ENCODE measurements at regions of chr1 and their contacts with region 1.

Region 1: DNA sequence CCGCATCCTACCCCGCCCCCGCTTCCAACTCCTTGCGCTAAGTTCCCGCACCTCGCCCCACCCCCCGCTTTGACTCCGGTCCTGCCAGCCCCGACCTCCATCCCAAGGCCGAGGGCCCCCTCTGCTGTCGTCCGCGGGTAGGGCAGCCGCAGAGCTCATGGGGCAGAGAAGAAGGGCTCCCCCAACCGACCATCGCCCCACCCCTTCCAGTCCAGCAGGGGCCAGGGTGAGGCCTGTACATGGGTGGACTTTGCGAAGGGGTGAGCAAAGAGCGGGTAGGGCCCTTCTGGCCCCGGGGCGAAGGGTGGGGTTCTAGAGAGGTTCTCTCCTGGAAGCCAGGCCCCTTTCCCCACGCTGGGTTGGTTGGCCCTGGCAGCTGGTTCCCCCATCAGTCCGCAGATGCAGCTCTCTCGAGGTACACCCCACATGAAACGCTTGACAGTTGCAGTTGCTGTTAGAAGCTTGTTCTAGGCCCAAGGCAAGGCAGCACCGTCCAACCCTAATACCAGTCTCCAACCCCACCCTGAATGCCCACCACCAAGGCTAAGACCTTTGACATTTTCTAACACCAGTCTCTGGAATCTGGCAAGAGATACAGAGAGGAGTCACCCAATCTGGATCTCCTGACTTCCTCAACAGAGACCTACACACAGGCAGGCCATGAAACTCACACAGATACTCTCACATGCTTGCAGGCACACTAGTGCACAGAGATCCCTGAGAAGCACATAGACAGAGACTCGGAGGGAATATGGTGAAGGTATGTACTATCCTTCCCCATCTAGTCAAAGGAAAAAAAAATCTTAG is 25.3 kb upstream of the ADGRB2 start:
- DNase-seq: peak; percentile 95 to 97
- ATAC-seq: peak; percentile 83 to 88 (median 83)
- H3K4me3 ChIP-seq: peak overlapping the region; percentile 73
- H3K4me3 Mint-ChIP-seq: peak overlapping the region; percentile 93
- H3K27ac ChIP-seq: peak overlapping the region; percentile 87
- H3K27ac Mint-ChIP-seq: peak overlapping the region; percentile 92 to 96
- H3K4me1 ChIP-seq: peaks cover 21% of the 10 kb centered on the region
- H3K4me1 Mint-ChIP-seq: peaks cover 11 to 28% of the 10 kb centered on the region in 2 donors
- H3K27me3 ChIP-seq: no peaks in the 10 kb centered on the region
- H3K27me3 Mint-ChIP-seq: no peaks in the 10 kb centered on the region
- CTCF ChIP-seq: peak; percentile 73

Region 2: GRCh38 chr1:31394628-31395193 is 394.8 kb before region 1 on chr1:
- intact Hi-C with region 1: loop called (anchors 2 kb)
- DNase-seq: peak; percentile 76 to 84
- ATAC-seq: peak; percentile 89 to 97 (median 96)
- H3K4me3 ChIP-seq: peak overlapping the region; percentile 45
- H3K4me3 Mint-ChIP-seq: peak overlapping the region; percentile 90
- H3K27ac ChIP-seq: no peak overlapping the region
- H3K27ac Mint-ChIP-seq: peak overlapping the region; percentile 53 to 65
- H3K4me1 ChIP-seq: peaks cover 9% of the 10 kb centered on the region
- H3K4me1 Mint-ChIP-seq: peaks cover 14 to 18% of the 10 kb centered on the region in 2 donors
- H3K27me3 ChIP-seq: no peaks in the 10 kb centered on the region
- H3K27me3 Mint-ChIP-seq: peaks cover 0 to 2% of the 10 kb centered on the region in 2 donors
- CTCF ChIP-seq: peak; percentile 88

Region 3: GRCh38 chr1:31501215-31501904 is 288.1 kb before region 1 on chr1:
- intact Hi-C with region 1: no loop called
- DNase-seq: no peak
- ATAC-seq: no peak
- H3K4me3 ChIP-seq: no peak overlapping the region
- H3K4me3 Mint-ChIP-seq: no peak overlapping the region
- H3K27ac ChIP-seq: no peak overlapping the region
- H3K27ac Mint-ChIP-seq: no peak overlapping the region
- H3K4me1 ChIP-seq: peaks cover 10% of the 10 kb centered on the region
- H3K4me1 Mint-ChIP-seq: peaks cover 10 to 11% of the 10 kb centered on the region in 2 donors
- H3K27me3 ChIP-seq: no peaks in the 10 kb centered on the region
- H3K27me3 Mint-ChIP-seq: peaks cover under 1 to 7% of the 10 kb centered on the region in 2 donors
- CTCF ChIP-seq: no peak

Region 4: GRCh38 chr1:31564134-31564989 is 225.1 kb before region 1 on chr1:
- intact Hi-C with region 1: loop called (anchors 1 kb)
- DNase-seq: peak in 1 of 2 donors; percentile 69
- ATAC-seq: peak; percentile 66 to 78 (median 74)
- H3K4me3 ChIP-seq: no peak overlapping the region
- H3K4me3 Mint-ChIP-seq: no peak overlapping the region
- H3K27ac ChIP-seq: no peak overlapping the region
- H3K27ac Mint-ChIP-seq: no peak overlapping the region
- H3K4me1 ChIP-seq: no peaks in the 10 kb centered on the region
- H3K4me1 Mint-ChIP-seq: no peaks in the 10 kb centered on the region
- H3K27me3 ChIP-seq: no peaks in the 10 kb centered on the region
- H3K27me3 Mint-ChIP-seq: peaks cover 22 to 34% of the 10 kb centered on the region in 2 donors
- CTCF ChIP-seq: peak; percentile 78

Region 5: GRCh38 chr1:31663622-31664452 is 125.6 kb before region 1 on chr1:
- intact Hi-C with region 1: loop called (anchors 1 kb)
- DNase-seq: peak; percentile 67 to 75
- ATAC-seq: peak; percentile 62 to 95 (median 85)
- H3K4me3 ChIP-seq: no peak overlapping the region
- H3K4me3 Mint-ChIP-seq: no peak overlapping the region
- H3K27ac ChIP-seq: no peak overlapping the region
- H3K27ac Mint-ChIP-seq: no peak overlapping the region
- H3K4me1 ChIP-seq: peaks cover 7% of the 10 kb centered on the region
- H3K4me1 Mint-ChIP-seq: no peaks in the 10 kb centered on the region
- H3K27me3 ChIP-seq: no peaks in the 10 kb centered on the region
- H3K27me3 Mint-ChIP-seq: peaks cover 0 to 3% of the 10 kb centered on the region in 2 donors
- CTCF ChIP-seq: peak; percentile 87

Region 6: GRCh38 chr1:31715087-31715872 is 74.2 kb before region 1 on chr1:
- intact Hi-C with region 1: loop called (anchors 2 kb)
- DNase-seq: peak in 1 of 2 donors; percentile 51
- ATAC-seq: peak; percentile 56 to 89 (median 76)
- H3K4me3 ChIP-seq: peak overlapping the region; percentile 27
- H3K4me3 Mint-ChIP-seq: peak overlapping the region; percentile 77
- H3K27ac ChIP-seq: no peak overlapping the region
- H3K27ac Mint-ChIP-seq: peak overlapping the region in 1 of 2 donors; percentile 67
- H3K4me1 ChIP-seq: peaks cover 20% of the 10 kb centered on the region
- H3K4me1 Mint-ChIP-seq: peaks cover 15 to 20% of the 10 kb centered on the region in 2 donors
- H3K27me3 ChIP-seq: peaks cover 11% of the 10 kb centered on the region
- H3K27me3 Mint-ChIP-seq: peaks cover 47 to 48% of the 10 kb centered on the region in 2 donors
- CTCF ChIP-seq: peak; percentile 53

Region 7: DNA sequence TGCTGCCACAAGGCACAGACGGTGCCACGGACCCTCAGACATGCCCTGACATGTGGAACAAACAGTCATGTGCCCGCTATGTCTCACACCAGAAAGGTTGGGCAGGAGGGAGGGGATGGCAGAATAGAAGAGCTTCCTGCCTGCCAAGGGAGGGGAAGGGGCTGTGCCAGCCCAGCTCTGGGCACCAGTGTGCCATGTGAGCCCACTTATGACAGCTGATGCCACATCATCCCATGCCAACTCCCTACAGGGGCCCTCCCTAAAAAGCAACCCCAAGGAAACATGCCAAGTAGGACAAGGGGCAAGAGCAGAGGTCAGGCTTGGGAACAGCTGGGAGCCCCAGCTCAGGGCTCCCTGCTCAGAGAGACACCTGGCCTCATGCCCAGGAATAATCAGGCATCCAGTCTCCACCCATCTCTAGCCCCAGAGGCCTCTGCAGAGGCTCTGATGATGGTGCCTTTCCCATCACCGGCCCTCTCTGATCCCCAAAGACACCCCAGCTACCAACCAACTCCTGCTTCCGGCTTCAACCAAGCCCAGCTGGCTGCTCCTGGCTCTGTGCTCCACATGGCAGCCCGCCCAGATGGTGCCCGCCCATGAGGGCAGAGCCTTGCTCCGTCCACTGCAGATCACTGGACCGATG is 35.6 kb before region 1 on chr1:
- intact Hi-C with region 1: loop called (anchors 5 kb)
- DNase-seq: no peak
- ATAC-seq: no peak
- H3K4me3 ChIP-seq: no peak overlapping the region
- H3K4me3 Mint-ChIP-seq: no peak overlapping the region
- H3K27ac ChIP-seq: no peak overlapping the region
- H3K27ac Mint-ChIP-seq: peak overlapping the region; percentile 26 to 94
- H3K4me1 ChIP-seq: peaks cover 42% of the 10 kb centered on the region
- H3K4me1 Mint-ChIP-seq: peaks cover 49 to 63% of the 10 kb centered on the region in 2 donors
- H3K27me3 ChIP-seq: no peaks in the 10 kb centered on the region
- H3K27me3 Mint-ChIP-seq: no peaks in the 10 kb centered on the region
- CTCF ChIP-seq: no peak

Region 8: DNA sequence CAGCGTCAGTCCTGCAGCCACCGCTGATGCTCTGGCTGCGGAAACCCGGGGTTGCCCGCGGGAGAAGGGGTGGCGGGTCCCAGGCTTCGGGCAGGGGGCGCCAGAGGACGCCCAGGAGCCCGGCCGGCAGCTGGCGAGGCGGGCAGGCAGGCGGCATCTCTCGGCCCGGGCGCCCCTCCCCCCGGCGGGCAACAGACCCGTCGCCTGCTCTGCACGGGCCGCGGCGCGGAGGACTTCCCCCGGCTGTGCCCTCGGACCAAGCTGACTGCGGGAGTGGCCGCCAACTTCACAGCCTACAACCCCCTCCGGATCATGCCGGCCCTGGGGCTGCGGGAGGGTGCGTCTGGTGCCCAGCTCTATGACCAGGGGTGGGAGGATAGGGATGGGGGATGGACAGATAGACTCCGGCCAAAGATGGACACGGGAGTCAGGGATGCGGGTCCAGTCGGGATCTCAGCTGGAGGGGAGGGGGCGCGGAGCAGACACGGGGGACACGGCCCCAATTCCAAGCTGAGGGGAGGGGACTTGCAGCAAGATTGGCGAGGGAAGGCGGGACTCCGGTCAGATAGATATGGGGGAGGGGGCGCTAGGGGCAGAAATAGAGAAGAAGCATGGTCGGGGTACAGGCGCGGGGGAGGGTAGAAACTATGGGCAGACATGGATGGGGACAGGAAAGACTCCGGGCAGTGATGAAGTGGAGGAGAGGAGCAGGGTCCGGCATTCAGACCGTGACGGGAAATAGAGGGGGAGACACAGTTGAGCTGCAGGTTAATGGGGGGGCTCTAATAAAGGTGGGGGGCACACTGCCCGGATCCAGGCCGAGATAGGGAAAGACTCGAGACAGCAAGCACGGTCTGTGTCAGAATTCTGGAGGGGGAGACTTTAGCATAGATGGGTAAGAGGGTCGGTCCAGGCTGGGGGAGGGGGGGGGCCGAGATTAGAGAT is 26.5 kb before region 1 on chr1:
- intact Hi-C with region 1: loop called (anchors 1 kb)
- DNase-seq: peak; percentile 75 to 86
- ATAC-seq: peak; percentile 53 to 65 (median 60)
- H3K4me3 ChIP-seq: peak overlapping the region; percentile 14
- H3K4me3 Mint-ChIP-seq: peak overlapping the region; percentile 90
- H3K27ac ChIP-seq: no peak overlapping the region
- H3K27ac Mint-ChIP-seq: peak overlapping the region in 1 of 2 donors; percentile 84
- H3K4me1 ChIP-seq: peaks cover 48% of the 10 kb centered on the region
- H3K4me1 Mint-ChIP-seq: peaks cover 14 to 45% of the 10 kb centered on the region in 2 donors
- H3K27me3 ChIP-seq: peaks cover 11% of the 10 kb centered on the region
- H3K27me3 Mint-ChIP-seq: peaks cover 0 to 8% of the 10 kb centered on the region in 2 donors
- CTCF ChIP-seq: peak; percentile 66

Region 9: GRCh38 chr1:31855038-31855845 is 65.8 kb after region 1 on chr1:
- intact Hi-C with region 1: no loop called
- DNase-seq: no peak
- ATAC-seq: no peak
- H3K4me3 ChIP-seq: no peak overlapping the region
- H3K4me3 Mint-ChIP-seq: no peak overlapping the region
- H3K27ac ChIP-seq: no peak overlapping the region
- H3K27ac Mint-ChIP-seq: no peak overlapping the region
- H3K4me1 ChIP-seq: no peaks in the 10 kb centered on the region
- H3K4me1 Mint-ChIP-seq: no peaks in the 10 kb centered on the region
- H3K27me3 ChIP-seq: no peaks in the 10 kb centered on the region
- H3K27me3 Mint-ChIP-seq: no peaks in the 10 kb centered on the region
- CTCF ChIP-seq: no peak